HepG2 (cell line): ENCODE measurements at regions of chr4 and their contacts with region 1.

Region 1: DNA sequence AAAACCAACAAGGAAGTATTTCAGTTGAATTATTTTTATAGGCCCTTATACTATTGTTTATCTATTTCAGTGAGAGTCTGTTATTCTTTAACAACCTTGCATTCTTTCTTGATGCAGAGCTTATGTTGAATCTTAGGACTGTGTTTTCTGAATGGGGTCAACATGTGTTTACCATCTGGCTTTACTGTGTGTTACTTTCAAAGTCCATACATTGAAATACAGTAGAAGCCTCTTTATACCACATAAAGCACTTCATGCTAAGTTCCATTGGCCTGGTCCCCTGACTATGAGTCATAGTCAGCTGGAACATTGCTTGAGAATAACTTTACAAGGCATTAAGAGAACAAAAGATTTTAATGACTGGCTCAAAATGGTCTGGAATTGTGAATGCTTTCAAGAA is 152.6 kb downstream of the GASK1B start:
- DNase-seq: peak; percentile 92
- ATAC-seq: peak; percentile 100
- H3K4me3 ChIP-seq: no peak overlapping the region; a peak in 1 of 6 replicates
- H3K27ac ChIP-seq: peak overlapping the region; percentile 60
- H3K4me1 ChIP-seq: peaks cover 35% of the 10 kb centered on the region
- H3K27me3 ChIP-seq: no peaks in the 10 kb centered on the region
- CTCF ChIP-seq: no peak
- EP300 ChIP-seq: peak in 1 of 2 experiments; percentile 89; a peak in 2 of 4 replicates
- POLR2A ChIP-seq: no peak
- RAD21 ChIP-seq: no peak

Region 2: GRCh38 chr4:158033416-158034120 is 13.4 kb after region 1 on chr4:
- CTCF ChIA-PET with region 1: no interaction called
- POLR2A ChIA-PET with region 1: interaction called, 4 read pairs
- in situ Hi-C with region 1: no loop called
- intact Hi-C with region 1: loop called (anchors 2 kb)
- DNase-seq: peak; percentile 19
- ATAC-seq: peak; percentile 63
- H3K4me3 ChIP-seq: no peak overlapping the region
- H3K27ac ChIP-seq: peak overlapping the region; percentile 33
- H3K4me1 ChIP-seq: peaks cover 57% of the 10 kb centered on the region
- H3K27me3 ChIP-seq: no peaks in the 10 kb centered on the region
- CTCF ChIP-seq: no peak
- EP300 ChIP-seq: no peak
- POLR2A ChIP-seq: no peak
- RAD21 ChIP-seq: no peak

Region 3: DNA sequence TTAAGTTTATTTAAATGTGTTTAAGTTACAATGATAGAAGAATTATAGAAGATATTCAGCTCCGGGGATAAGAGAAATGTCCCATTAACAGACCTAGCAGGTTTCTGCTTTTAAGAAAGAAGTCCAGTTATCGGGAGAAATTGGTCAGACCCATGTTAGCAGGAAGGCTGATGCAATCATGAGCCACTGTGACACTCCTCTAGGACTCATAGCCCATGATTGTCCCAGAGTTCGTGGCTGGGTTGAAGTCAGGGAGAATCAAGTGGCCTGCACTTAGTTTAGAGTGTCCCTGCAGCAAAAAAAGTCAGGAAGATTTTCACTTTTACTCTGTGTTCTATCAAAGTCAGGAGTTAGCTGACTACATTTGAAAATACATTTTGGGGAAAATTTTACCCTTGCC is 262.1 kb after region 1 on chr4:
- CTCF ChIA-PET with region 1: no interaction called
- POLR2A ChIA-PET with region 1: no interaction called
- in situ Hi-C with region 1: no loop called
- intact Hi-C with region 1: no loop called
- DNase-seq: no peak
- ATAC-seq: no peak
- H3K4me3 ChIP-seq: no peak overlapping the region
- H3K27ac ChIP-seq: no peak overlapping the region
- H3K4me1 ChIP-seq: no peaks in the 10 kb centered on the region
- H3K27me3 ChIP-seq: no peaks in the 10 kb centered on the region; a peak in 1 of 5 replicates
- CTCF ChIP-seq: no peak
- EP300 ChIP-seq: no peak
- POLR2A ChIP-seq: no peak
- RAD21 ChIP-seq: no peak

Region 4: GRCh38 chr4:158481811-158482210 is 461.6 kb after region 1 on chr4:
- CTCF ChIA-PET with region 1: no interaction called
- POLR2A ChIA-PET with region 1: no interaction called
- in situ Hi-C with region 1: no loop called
- intact Hi-C with region 1: no loop called
- DNase-seq: no peak
- ATAC-seq: no peak
- H3K4me3 ChIP-seq: no peak overlapping the region
- H3K27ac ChIP-seq: no peak overlapping the region
- H3K4me1 ChIP-seq: no peaks in the 10 kb centered on the region
- H3K27me3 ChIP-seq: no peaks in the 10 kb centered on the region
- CTCF ChIP-seq: no peak
- EP300 ChIP-seq: no peak
- POLR2A ChIP-seq: no peak
- RAD21 ChIP-seq: no peak